A549 (cell line): ENCODE measurements at regions of chr15 and their contacts with region 1.

Region 1: DNA sequence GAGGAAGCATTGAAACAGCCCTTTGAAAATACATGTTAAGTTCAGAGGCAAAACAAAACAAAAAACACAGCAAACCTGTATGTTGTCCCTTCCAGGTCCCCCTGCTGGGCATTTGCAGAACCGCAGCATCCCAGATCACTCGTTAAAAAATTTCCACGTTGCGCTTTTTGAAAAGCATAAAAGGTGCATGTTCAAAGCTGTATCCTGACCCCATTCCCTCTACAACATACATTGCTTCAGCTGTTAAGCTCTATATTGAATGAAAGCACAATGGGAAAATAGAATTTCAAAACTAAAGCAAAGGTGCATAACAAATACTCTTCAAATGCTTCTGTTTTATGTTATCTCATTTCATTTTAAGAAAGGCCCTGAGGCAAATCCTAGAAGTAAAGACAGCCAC is 328.3 kb downstream of the THSD4 start:
- DNase-seq: peak; percentile 47 to 77
- ATAC-seq: peak; percentile 15 to 25; a peak in 1 of 6 replicates
- H3K4me3 ChIP-seq: no peak overlapping the region
- H3K27ac ChIP-seq: peak overlapping the region; percentile 85
- H3K4me1 ChIP-seq: peaks cover 75% of the 10 kb centered on the region
- CTCF ChIP-seq: peak; percentile 81
- EP300 ChIP-seq: no peak
- POLR2A ChIP-seq: no peak
- RAD21 ChIP-seq: peak; percentile 53 to 59

Region 2: DNA sequence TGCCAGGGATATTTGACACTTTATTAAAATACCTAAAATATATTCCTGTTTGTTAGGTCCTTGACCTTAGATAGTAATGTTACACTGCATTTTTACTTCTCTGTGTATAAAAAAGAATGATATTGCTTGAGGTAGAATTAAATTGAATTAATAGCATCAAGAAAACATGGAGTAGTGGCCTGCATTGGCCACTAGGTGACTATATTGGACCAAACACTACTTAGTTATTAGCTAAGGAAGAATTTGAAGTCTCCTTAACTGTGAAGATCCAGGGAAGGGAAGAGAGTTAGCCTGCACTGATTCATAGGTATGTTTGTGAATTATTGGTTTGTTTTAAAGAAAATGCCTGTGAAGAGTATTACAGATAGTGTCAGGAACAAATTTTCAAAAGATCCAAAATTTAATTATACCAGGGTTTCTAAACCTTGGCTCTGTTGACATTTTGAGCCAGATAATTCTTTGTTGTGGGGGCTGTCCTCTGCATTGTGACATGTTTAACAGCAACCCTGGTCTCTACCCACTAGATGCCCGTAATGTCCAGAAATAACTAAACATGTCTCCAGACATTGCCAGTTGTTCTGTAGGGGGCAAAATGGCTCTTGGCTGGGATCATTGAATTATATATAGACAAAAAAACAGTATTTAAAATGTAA is 431.9 kb before region 1 on chr15:
- CTCF ChIA-PET with region 1: interaction called, 25 read pairs
- POLR2A ChIA-PET with region 1: interaction called, 3 read pairs
- DNase-seq: peak; percentile 35 to 75
- ATAC-seq: peak; percentile 92 to 94
- H3K4me3 ChIP-seq: no peak overlapping the region
- H3K27ac ChIP-seq: peak overlapping the region; percentile 36 to 71; a peak in 4 of 6 replicates
- H3K4me1 ChIP-seq: peaks cover 6% of the 10 kb centered on the region
- CTCF ChIP-seq: peak; percentile 98
- EP300 ChIP-seq: no peak
- POLR2A ChIP-seq: no peak
- RAD21 ChIP-seq: peak; percentile 97 to 98

Region 3: GRCh38 chr15:71114896-71115554 is 328.5 kb before region 1 on chr15 and contains the start of gene THSD4:
- CTCF ChIA-PET with region 1: interaction called, 52 read pairs
- POLR2A ChIA-PET with region 1: no interaction called
- DNase-seq: peak; percentile 93 to 99
- ATAC-seq: peak; percentile 76 to 79
- H3K4me3 ChIP-seq: peak within 1 kb of the TSS; percentile 59
- H3K27ac ChIP-seq: peak within 1 kb of the TSS; percentile 93 to 94
- H3K4me1 ChIP-seq: peaks cover 54% of the 10 kb centered on the region
- CTCF ChIP-seq: peak; percentile 99
- EP300 ChIP-seq: no peak; a peak in 1 of 5 replicates
- POLR2A ChIP-seq: peak; percentile 48
- RAD21 ChIP-seq: peak; percentile 77 to 92
- polyA plus RNA-seq, gene THSD4: 40.7 and 47.4 TPM in 2 replicates

Region 4: DNA sequence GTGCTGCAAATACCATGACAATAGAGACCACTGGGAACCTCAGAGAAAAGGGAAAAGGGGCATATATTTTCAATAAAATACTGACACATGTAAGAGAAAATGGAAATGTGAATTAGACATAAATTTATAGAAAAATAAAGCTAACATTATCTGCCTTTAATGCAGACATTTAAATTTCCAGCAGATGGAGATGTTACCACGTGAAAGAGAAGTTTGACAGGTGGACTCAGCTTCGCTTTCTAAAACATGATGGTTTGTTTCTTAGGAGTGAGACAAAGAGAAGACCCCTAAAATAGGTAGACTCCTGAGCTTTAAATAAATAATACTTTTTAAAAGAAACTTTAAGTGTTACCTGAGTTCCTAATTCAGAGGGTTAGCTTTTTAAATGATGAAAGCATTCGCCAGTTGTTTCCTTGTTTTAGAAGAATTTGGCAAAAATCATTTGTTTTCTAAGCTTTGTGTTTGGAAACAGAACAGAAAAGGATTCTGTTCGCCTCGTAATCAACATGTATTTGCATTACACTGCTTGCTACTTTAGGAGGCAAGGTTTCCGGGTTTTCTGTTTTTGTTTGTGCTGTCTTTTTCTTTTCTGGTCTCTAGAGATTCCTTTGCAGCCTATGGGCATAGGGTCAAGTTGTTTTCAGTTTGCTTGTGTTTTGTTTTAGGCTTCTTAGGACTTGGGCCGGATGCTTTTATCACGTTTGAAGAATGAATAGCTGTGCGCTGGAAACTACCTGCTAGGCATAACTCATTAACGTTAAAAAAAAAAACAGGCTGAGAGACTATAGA is 56.9 kb before region 1 on chr15:
- CTCF ChIA-PET with region 1: interaction called, 43 read pairs
- POLR2A ChIA-PET with region 1: interaction called, 3 read pairs
- DNase-seq: peak in 1 of 2 experiments; percentile 56
- ATAC-seq: peak; percentile 54 to 66; a peak in 4 of 6 replicates
- H3K4me3 ChIP-seq: no peak overlapping the region
- H3K27ac ChIP-seq: peak overlapping the region; percentile 60 to 69
- H3K4me1 ChIP-seq: peaks cover 40% of the 10 kb centered on the region
- CTCF ChIP-seq: peak; percentile 83
- EP300 ChIP-seq: no peak
- POLR2A ChIP-seq: no peak
- RAD21 ChIP-seq: peak; percentile 84 to 89

Region 5: DNA sequence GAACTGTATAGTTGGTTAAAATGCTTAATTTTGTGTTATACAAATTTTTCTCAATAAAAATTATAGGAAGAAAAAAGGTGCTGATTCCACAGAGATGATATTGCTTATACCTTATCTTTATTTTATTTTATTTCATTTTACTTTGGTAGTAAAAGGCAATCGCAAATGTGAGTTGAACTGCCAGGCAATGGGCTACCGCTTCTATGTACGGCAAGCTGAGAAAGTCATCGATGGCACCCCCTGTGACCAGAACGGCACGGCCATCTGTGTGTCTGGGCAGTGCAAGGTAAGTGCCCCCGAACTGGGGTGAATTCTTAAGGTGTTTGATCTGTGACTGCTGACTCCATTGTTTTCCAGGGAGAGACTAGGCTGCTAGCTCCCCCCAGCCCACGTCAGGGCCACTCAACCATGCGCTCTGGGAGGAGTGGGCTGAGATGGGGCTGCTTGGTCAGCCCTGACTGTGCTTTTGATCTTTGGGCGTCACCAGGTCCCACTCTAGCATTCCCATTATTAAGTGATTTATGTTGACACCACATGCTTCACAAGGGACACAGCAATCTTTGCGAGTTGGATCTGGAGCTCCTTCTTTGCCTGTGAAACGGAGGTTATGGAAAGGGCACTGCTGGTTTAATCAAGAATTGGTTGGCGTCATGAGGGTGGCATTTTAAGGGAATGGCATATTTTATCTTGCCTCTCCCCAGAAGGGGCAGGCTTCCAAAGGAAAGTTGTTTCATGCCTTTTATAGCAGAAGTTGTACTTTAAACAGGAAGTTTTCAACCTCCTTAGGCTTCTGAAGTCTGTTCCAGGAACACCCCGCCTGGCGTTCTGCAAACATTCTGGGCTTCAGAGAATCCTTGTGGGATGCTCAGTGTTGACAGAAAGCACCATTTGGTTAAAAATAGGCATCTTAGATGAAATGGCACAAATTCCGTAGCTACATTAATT is 31.7 kb before region 1 on chr15:
- CTCF ChIA-PET with region 1: interaction called, 17 read pairs
- POLR2A ChIA-PET with region 1: interaction called, 4 read pairs
- DNase-seq: peak; percentile 74 to 98
- ATAC-seq: peak; percentile 92 to 93
- H3K4me3 ChIP-seq: peak overlapping the region; percentile 21
- H3K27ac ChIP-seq: peak overlapping the region; percentile 83 to 87
- H3K4me1 ChIP-seq: peaks cover 65% of the 10 kb centered on the region
- CTCF ChIP-seq: peak; percentile 37; the same call in 1 of the 3 replicates
- EP300 ChIP-seq: peak; percentile 93 to 97
- POLR2A ChIP-seq: no peak
- RAD21 ChIP-seq: peak in 1 of 2 experiments; percentile 38; a peak in 2 of 5 replicates

Region 6: DNA sequence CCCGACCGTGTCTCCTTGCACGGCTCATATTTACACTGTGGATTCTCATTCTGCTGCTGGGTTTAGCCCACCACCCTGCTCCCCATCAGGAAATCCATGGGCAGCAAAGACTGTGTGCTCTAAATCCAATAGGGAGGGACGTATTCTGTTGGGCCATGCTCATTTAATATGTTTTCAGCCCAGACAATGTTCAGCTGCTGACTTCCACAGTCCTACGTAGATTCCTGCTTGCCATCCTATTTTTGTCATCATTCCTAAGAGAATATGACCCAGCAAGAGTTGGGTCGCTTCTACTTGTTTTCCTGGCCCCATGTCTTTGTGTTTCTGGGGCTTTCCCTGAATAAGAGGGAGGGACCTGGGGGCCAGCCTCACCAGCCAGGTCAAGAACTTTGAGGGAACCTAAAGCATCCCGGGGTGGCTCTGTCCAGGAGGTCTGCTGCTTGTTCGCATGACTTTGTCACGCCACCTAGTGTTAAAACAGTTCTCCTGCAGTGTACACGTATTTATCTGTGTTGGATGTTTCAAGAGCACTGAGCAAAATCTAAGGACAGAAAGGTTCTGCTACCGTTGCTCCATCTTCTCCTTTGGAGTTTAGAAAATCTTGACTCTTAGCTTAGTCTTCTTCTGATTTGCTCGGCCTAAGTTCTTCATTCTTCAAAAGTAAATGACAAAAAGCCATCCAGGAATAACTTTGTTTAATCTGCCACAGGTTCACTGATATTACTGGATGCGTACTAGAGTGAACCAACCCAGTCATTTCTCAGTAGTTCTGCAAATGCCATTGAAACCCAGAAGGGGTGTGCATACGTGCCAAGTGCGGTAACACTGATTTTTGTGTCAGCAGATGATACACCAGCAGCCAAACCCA is 287.0 kb after region 1 on chr15:
- CTCF ChIA-PET with region 1: interaction called, 10 read pairs
- POLR2A ChIA-PET with region 1: no interaction called
- DNase-seq: peak; percentile 85 to 88
- ATAC-seq: peak; percentile 88 to 98
- H3K4me3 ChIP-seq: no peak overlapping the region
- H3K27ac ChIP-seq: no peak overlapping the region
- H3K4me1 ChIP-seq: peaks cover 4% of the 10 kb centered on the region; the same call in 2 of the 3 replicates
- CTCF ChIP-seq: peak; percentile 91
- EP300 ChIP-seq: no peak
- POLR2A ChIP-seq: no peak
- RAD21 ChIP-seq: peak; percentile 80 to 81